ENCODE measurements at regions of chr6 and their contacts with region 1.

Region 1: GRCh38 chr6:83067448-83068413 is at the start of gene DOP1A:
- DNase-seq: peak; percentile 92
- CTCF ChIP-seq: peak; percentile 99

Region 2: DNA sequence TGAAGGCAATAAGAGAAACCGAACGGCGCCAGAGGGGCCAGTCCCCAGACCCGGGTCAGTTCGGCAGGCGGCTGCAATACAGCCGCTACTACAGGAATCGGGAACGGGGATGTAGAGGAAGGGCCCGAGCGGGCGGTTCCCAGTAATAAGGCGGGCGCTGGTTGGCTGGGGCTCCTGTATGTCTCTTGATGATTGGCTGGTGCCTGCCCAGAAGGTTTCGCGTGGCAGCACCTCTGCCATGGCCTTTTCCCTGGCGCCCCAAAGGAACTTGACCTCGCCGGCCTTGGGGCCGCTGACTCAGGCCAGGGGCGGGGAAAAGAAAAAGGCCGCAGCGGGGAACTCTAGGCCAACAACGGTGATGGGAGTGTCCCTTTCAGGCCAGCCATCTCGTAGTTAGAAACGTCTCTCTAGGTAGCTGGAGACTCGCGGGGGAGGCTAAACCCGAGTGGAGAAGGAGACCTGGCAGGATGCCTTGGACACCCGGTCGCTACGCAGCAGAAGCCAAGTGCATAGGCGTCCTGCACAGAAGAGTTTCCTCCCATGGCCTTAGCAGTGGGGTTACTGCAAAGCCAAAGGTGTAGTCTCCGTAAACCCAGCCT is 820.0 kb before region 1 on chr6 and contains the start of gene IBTK:
- CTCF ChIA-PET with region 1: interaction called, 31 read pairs
- POLR2A ChIA-PET with region 1: interaction called, 3 read pairs
- DNase-seq: peak; percentile 94
- CTCF ChIP-seq: no peak

Region 3: DNA sequence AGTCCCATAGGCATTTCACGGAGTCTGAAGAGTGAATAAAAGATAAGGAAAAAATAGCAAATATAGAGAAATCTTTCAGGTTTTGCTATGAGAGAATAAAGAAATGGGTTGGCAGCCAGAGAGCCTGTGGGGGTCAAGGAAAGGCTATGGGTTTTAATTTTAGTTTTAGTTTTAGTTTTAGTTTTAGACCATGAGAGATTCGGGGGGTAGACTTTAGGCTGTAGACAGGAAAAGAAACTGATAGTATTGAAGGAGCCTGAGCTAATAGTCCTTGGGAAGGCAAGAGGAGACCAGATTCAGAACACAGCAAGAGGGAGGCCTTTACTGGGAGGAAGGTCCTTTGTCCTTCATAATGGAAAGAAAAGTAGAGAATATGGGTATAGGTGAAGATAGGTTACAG is 19.0 kb after region 1 on chr6:
- CTCF ChIA-PET with region 1: interaction called, 210 read pairs
- POLR2A ChIA-PET with region 1: no interaction called
- DNase-seq: peak; percentile 63
- CTCF ChIP-seq: no peak

Region 4: DNA sequence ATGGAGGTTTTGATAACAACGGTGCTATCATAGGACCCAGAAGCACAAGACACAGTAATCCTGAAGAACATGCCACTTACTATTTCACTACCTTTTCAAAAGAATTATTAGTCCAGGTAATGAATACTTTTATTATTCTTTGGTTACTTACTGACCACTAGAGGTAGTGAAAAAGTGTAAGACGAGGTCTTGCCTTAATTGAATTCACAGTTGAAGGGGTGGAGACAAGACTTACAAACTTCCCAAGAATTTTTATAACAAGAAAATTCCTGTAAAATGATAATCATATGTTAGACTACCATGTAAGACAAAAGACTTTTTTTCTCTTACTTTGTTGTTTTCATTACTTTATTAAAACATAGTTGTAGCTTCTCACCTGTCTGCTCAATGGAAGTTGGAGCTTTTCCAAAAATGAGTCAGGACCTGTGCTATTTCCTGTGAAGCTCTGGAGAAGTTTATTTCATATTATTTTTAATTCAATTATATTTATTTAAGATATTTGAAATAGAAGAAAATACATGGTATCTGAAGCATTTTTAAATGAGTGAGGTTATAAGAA is 52.1 kb after region 1 on chr6:
- CTCF ChIA-PET with region 1: interaction called, 24 read pairs
- POLR2A ChIA-PET with region 1: no interaction called
- DNase-seq: no peak
- CTCF ChIP-seq: no peak

Region 5: GRCh38 chr6:83192871-83193746 is 125.4 kb after region 1 on chr6 and contains the starts of genes PGM3 and RWDD2A:
- CTCF ChIA-PET with region 1: interaction called, 114 read pairs
- POLR2A ChIA-PET with region 1: no interaction called
- DNase-seq: peak; percentile 98
- CTCF ChIP-seq: no peak

Region 6: DNA sequence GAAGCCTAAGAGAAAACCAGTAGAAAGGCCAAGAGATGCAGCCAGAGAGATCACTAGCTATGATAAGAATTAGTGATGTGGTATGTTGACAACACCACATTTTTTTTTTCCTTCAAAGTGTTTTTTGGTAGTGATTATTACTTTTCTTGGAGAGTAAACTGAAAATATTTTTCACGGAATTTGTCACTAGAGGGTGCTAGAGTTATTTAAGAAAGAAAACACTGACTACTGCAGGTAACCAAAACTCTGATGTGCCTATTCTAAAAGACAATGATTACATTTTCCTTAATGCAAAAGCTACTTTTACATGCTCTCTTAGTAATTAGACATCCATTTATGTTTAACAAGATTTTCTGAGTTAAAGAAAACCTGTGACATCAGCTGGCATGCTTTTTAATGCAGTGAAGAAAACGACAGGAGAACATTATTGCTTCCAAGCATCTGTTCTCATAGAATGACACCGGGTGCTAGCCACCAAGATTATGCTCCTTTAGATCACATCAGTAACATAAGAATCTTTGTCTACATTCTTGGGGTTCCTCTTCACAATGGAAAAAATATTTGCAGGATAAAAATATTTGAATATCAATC is 154.3 kb after region 1 on chr6:
- CTCF ChIA-PET with region 1: interaction called, 260 read pairs
- POLR2A ChIA-PET with region 1: no interaction called
- DNase-seq: peak; percentile 24
- CTCF ChIP-seq: peak; percentile 27

Measured in GM10248 (cell line).